ENCODE measurements at regions of chr2 and their contacts with region 1.

Region 1: GRCh38 chr2:229800997-229801754 is 86.8 kb upstream of the DNER start:
- DNase-seq: peak; percentile 62 to 87 (median 70)
- ATAC-seq: peak; percentile 73
- H3K4me3 ChIP-seq: no peak overlapping the region
- H3K4me3 Mint-ChIP-seq: no peak overlapping the region
- H3K27ac ChIP-seq: no peak overlapping the region
- H3K27ac Mint-ChIP-seq: peak overlapping the region; percentile 8
- H3K4me1 ChIP-seq: no peaks in the 10 kb centered on the region
- H3K4me1 Mint-ChIP-seq: peaks cover 11% of the 10 kb centered on the region
- H3K27me3 ChIP-seq: no peaks in the 10 kb centered on the region
- H3K27me3 Mint-ChIP-seq: no peaks in the 10 kb centered on the region
- CTCF ChIP-seq: peak; percentile 87

Region 2: DNA sequence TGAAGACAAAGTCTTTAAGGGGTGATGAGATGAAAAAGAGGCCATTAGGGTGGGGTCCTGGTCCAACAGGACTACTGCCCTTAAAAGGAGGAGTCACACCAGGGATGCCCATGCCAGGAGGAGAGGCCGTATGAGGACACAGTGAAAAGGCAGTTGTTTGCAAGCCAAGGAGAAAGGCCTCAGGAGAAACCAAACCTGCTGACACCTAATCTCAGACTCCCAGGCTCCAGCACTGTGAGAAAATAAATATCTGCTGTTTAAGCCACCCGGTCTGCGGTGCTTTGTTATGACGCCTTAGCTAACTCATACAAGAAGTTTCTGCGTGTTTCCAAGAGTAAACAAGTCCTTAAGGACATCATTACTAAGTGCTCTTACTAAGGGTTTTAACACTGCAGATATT is 180.4 kb before region 1 on chr2:
- CTCF ChIA-PET with region 1: no interaction called
- POLR2A ChIA-PET with region 1: no interaction called
- intact Hi-C with region 1: no loop called
- DNase-seq: no peak
- ATAC-seq: no peak
- H3K4me3 ChIP-seq: no peak overlapping the region
- H3K4me3 Mint-ChIP-seq: no peak overlapping the region
- H3K27ac ChIP-seq: no peak overlapping the region
- H3K27ac Mint-ChIP-seq: no peak overlapping the region
- H3K4me1 ChIP-seq: no peaks in the 10 kb centered on the region
- H3K4me1 Mint-ChIP-seq: no peaks in the 10 kb centered on the region
- H3K27me3 ChIP-seq: peaks cover 3 to 13% of the 10 kb centered on the region in 2 experiments
- H3K27me3 Mint-ChIP-seq: peaks cover 20% of the 10 kb centered on the region
- CTCF ChIP-seq: no peak

Region 3: DNA sequence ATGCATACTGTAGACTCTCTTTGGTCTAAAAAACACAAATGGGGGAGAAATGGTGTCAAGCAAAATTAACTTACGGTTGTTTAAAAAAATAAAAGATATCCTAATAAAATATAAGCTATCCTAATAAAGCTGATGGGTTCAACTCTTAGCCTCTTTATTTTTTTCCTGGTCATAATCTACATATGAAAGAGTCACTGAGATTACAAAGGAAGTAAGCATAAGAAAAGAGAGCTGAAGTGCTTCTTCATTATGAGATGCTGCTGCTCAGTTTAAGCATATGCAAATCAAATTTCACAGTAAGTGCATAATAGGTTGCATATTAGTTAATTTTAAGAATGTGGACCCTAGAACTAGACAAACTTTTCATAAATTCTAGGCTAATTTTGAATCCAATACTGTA is 26.9 kb before region 1 on chr2:
- CTCF ChIA-PET with region 1: no interaction called
- POLR2A ChIA-PET with region 1: no interaction called
- intact Hi-C with region 1: no loop called
- DNase-seq: no peak
- ATAC-seq: no peak
- H3K4me3 ChIP-seq: no peak overlapping the region
- H3K4me3 Mint-ChIP-seq: no peak overlapping the region
- H3K27ac ChIP-seq: no peak overlapping the region
- H3K27ac Mint-ChIP-seq: no peak overlapping the region
- H3K4me1 ChIP-seq: peaks cover 3% of the 10 kb centered on the region
- H3K4me1 Mint-ChIP-seq: peaks cover 29% of the 10 kb centered on the region
- H3K27me3 ChIP-seq: no peaks in the 10 kb centered on the region
- H3K27me3 Mint-ChIP-seq: no peaks in the 10 kb centered on the region
- CTCF ChIP-seq: no peak

Region 4: GRCh38 chr2:229852565-229852964 is 51.4 kb after region 1 on chr2:
- CTCF ChIA-PET with region 1: interaction called, 16 read pairs
- POLR2A ChIA-PET with region 1: interaction called, 4 read pairs
- intact Hi-C with region 1: loop called (anchors 5 to 10 kb)
- DNase-seq: peak; percentile 23 to 80 (median 56)
- ATAC-seq: peak; percentile 91
- H3K4me3 ChIP-seq: no peak overlapping the region
- H3K4me3 Mint-ChIP-seq: peak overlapping the region; percentile 69
- H3K27ac ChIP-seq: peak overlapping the region; percentile 2 to 19
- H3K27ac Mint-ChIP-seq: peak overlapping the region; percentile 90
- H3K4me1 ChIP-seq: peaks cover 30% of the 10 kb centered on the region
- H3K4me1 Mint-ChIP-seq: peaks cover 87% of the 10 kb centered on the region
- H3K27me3 ChIP-seq: no peaks in the 10 kb centered on the region
- H3K27me3 Mint-ChIP-seq: no peaks in the 10 kb centered on the region
- CTCF ChIP-seq: no peak

Region 5: DNA sequence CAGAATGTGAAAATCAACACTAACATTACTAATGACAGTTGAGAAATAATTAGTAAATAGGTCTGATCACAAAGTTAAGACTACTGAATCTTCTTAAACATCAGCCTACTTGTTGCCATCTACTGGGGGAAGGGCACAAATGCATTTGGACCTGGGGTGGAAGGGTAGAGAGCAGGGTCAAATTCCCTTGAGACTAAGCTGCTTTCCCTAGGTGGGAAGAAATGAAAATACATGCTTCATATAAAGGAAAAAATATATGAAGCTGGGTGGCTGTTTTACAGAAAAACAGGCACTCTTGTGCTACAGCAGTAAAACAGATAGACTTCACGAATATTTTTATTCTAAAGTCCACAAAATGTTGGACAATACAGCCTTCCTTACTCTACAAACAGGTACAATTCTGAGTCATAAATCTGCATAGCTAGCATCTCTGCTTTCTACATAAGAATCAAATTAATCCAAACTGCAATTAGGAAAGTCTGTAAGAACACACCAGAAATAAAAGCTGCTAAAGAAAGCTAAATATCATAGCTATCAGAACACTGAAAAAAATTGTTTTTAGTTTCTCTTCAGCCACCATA is 109.7 kb after region 1 on chr2:
- CTCF ChIA-PET with region 1: interaction called, 23 read pairs
- POLR2A ChIA-PET with region 1: interaction called, 4 read pairs
- intact Hi-C with region 1: loop called (anchors 1 kb)
- DNase-seq: peak in 5 of 14 experiments; percentile 19 to 67 (median 53)
- ATAC-seq: peak; percentile 75
- H3K4me3 ChIP-seq: no peak overlapping the region
- H3K4me3 Mint-ChIP-seq: peak overlapping the region; percentile 6
- H3K27ac ChIP-seq: peak overlapping the region; percentile 9 to 21
- H3K27ac Mint-ChIP-seq: peak overlapping the region; percentile 70
- H3K4me1 ChIP-seq: peaks cover 17% of the 10 kb centered on the region
- H3K4me1 Mint-ChIP-seq: peaks cover 66% of the 10 kb centered on the region
- H3K27me3 ChIP-seq: no peaks in the 10 kb centered on the region
- H3K27me3 Mint-ChIP-seq: no peaks in the 10 kb centered on the region
- CTCF ChIP-seq: peak; percentile 69

Region 6: GRCh38 chr2:230007931-230008707 is 206.9 kb after region 1 on chr2:
- CTCF ChIA-PET with region 1: interaction called, 3 read pairs
- POLR2A ChIA-PET with region 1: no interaction called
- intact Hi-C with region 1: loop called in 1 of 2 experiments (anchors 5 kb)
- DNase-seq: peak; percentile 67 to 86 (median 78)
- ATAC-seq: peak; percentile 72
- H3K4me3 ChIP-seq: no peak overlapping the region
- H3K4me3 Mint-ChIP-seq: peak overlapping the region; percentile 7
- H3K27ac ChIP-seq: no peak overlapping the region
- H3K27ac Mint-ChIP-seq: no peak overlapping the region
- H3K4me1 ChIP-seq: no peaks in the 10 kb centered on the region
- H3K4me1 Mint-ChIP-seq: no peaks in the 10 kb centered on the region
- H3K27me3 ChIP-seq: no peaks in the 10 kb centered on the region
- H3K27me3 Mint-ChIP-seq: no peaks in the 10 kb centered on the region
- CTCF ChIP-seq: peak; percentile 93

Region 7: GRCh38 chr2:230160112-230160660 is 359.0 kb after region 1 on chr2:
- CTCF ChIA-PET with region 1: interaction called, 4 read pairs
- POLR2A ChIA-PET with region 1: no interaction called
- intact Hi-C with region 1: loop called (anchors 1 to 5 kb)
- DNase-seq: peak; percentile 21 to 73 (median 40)
- ATAC-seq: peak; percentile 48
- H3K4me3 ChIP-seq: no peak overlapping the region
- H3K4me3 Mint-ChIP-seq: no peak overlapping the region
- H3K27ac ChIP-seq: no peak overlapping the region
- H3K27ac Mint-ChIP-seq: no peak overlapping the region
- H3K4me1 ChIP-seq: peaks cover 4% of the 10 kb centered on the region
- H3K4me1 Mint-ChIP-seq: no peaks in the 10 kb centered on the region
- H3K27me3 ChIP-seq: no peaks in the 10 kb centered on the region
- H3K27me3 Mint-ChIP-seq: no peaks in the 10 kb centered on the region
- CTCF ChIP-seq: peak; percentile 93